Caco-2 (cell line): ENCODE measurements at regions of chr5 and their contacts with region 1.

Region 1: DNA sequence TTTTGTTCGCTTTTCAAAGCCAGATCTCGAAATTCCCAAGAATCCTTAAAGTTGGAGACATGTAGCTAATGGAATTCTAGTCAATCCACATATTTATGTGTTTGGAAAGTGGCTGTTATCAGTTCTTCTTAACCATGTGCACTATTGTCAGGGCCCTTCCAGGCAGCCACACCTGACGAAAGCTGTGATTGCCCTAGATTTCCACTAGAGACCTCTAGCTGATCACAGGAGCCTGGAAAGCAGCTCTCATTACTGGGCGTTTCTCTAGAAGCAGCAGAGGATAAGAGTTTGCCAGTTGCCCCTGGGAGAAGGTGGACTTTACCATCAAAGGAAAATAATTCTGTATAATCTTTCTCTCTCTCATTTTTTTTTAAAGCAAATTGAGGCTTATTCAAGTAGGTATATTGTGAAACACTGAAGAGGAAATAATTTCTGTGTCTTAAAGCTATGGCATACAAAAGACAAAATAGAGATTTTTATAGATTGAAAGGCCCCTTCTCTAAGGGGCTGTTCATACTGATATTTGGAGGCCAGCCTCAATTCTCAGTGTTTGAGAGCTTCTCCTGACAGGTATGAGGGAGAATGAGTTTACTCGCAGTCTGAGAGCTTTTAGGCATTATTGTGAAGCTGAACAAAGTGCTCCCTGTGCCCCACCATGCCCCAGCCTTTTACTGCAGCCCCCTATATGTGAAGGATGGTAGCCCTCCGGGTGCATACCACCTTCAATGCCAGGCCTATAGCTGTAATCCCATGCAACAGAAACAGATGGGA is 405.4 kb upstream of the ACTBL2 start:
- DNase-seq: peak; percentile 72 to 75
- H3K4me3 ChIP-seq: no peak overlapping the region
- H3K4me3 Mint-ChIP-seq: no peak overlapping the region
- H3K27ac Mint-ChIP-seq: no peak overlapping the region
- H3K4me1 ChIP-seq: no peaks in the 10 kb centered on the region
- H3K4me1 Mint-ChIP-seq: no peaks in the 10 kb centered on the region
- H3K27me3 ChIP-seq: no peaks in the 10 kb centered on the region
- H3K27me3 Mint-ChIP-seq: no peaks in the 10 kb centered on the region
- CTCF ChIP-seq: peak; percentile 55 to 80

Region 2: GRCh38 chr5:57499262-57500050 is 388.6 kb before region 1 on chr5:
- CTCF ChIA-PET with region 1: interaction called, 3 read pairs
- POLR2A ChIA-PET with region 1: no interaction called
- intact Hi-C with region 1: loop called (anchors 5 kb)
- DNase-seq: peak in 1 of 2 experiments; percentile 53
- H3K4me3 ChIP-seq: no peak overlapping the region
- H3K4me3 Mint-ChIP-seq: peak overlapping the region; percentile 46
- H3K27ac Mint-ChIP-seq: no peak overlapping the region
- H3K4me1 ChIP-seq: peaks cover 7% of the 10 kb centered on the region
- H3K4me1 Mint-ChIP-seq: peaks cover 8% of the 10 kb centered on the region
- H3K27me3 ChIP-seq: no peaks in the 10 kb centered on the region
- H3K27me3 Mint-ChIP-seq: no peaks in the 10 kb centered on the region
- CTCF ChIP-seq: peak; percentile 67 to 77

Region 3: GRCh38 chr5:57779383-57780223 is 108.4 kb before region 1 on chr5:
- CTCF ChIA-PET with region 1: interaction called, 25 read pairs
- POLR2A ChIA-PET with region 1: no interaction called
- intact Hi-C with region 1: loop called (anchors 1 kb)
- DNase-seq: peak; percentile 50 to 69
- H3K4me3 ChIP-seq: no peak overlapping the region
- H3K4me3 Mint-ChIP-seq: no peak overlapping the region
- H3K27ac Mint-ChIP-seq: no peak overlapping the region
- H3K4me1 ChIP-seq: peaks cover 34% of the 10 kb centered on the region
- H3K4me1 Mint-ChIP-seq: peaks cover 21% of the 10 kb centered on the region
- H3K27me3 ChIP-seq: no peaks in the 10 kb centered on the region
- H3K27me3 Mint-ChIP-seq: no peaks in the 10 kb centered on the region
- CTCF ChIP-seq: peak; percentile 65 to 68